ENCODE measurements at regions of chr20 and their contacts with region 1.

Region 1: GRCh38 chr20:44701118-44701857 is 13.9 kb upstream of the CCN5 start:
- DNase-seq: peak; percentile 38
- H3K4me3 Mint-ChIP-seq: no peak overlapping the region
- H3K27ac Mint-ChIP-seq: no peak overlapping the region
- H3K4me1 Mint-ChIP-seq: peaks cover 19% of the 10 kb centered on the region
- H3K27me3 Mint-ChIP-seq: no peaks in the 10 kb centered on the region
- CTCF ChIP-seq: no peak

Region 2: GRCh38 chr20:44598423-44599305 is 102.6 kb before region 1 on chr20:
- CTCF ChIA-PET with region 1: no interaction called
- POLR2A ChIA-PET with region 1: no interaction called
- intact Hi-C with region 1: no loop called
- DNase-seq: no peak
- H3K4me3 Mint-ChIP-seq: no peak overlapping the region
- H3K27ac Mint-ChIP-seq: no peak overlapping the region
- H3K4me1 Mint-ChIP-seq: peaks cover 12% of the 10 kb centered on the region
- H3K27me3 Mint-ChIP-seq: no peaks in the 10 kb centered on the region
- CTCF ChIP-seq: no peak

Region 3: GRCh38 chr20:44714696-44715482 is 13.6 kb after region 1 on chr20 and contains the start of gene CCN5:
- CTCF ChIA-PET with region 1: interaction called, 10 read pairs
- POLR2A ChIA-PET with region 1: interaction called, 5 read pairs
- intact Hi-C with region 1: no loop called
- DNase-seq: peak; percentile 94
- H3K4me3 Mint-ChIP-seq: peak within 1 kb of the TSS; percentile 24
- H3K27ac Mint-ChIP-seq: peak within 1 kb of the TSS; percentile 73
- H3K4me1 Mint-ChIP-seq: peaks cover 34% of the 10 kb centered on the region
- H3K27me3 Mint-ChIP-seq: no peaks in the 10 kb centered on the region
- CTCF ChIP-seq: no peak
- total RNA-seq, gene CCN5: 0.93 and 1.4 TPM in 2 replicates

Region 4: GRCh38 chr20:44780226-44780625 is 78.9 kb after region 1 on chr20:
- CTCF ChIA-PET with region 1: no interaction called
- POLR2A ChIA-PET with region 1: no interaction called
- intact Hi-C with region 1: no loop called
- DNase-seq: peak; percentile 60
- H3K4me3 Mint-ChIP-seq: no peak overlapping the region
- H3K27ac Mint-ChIP-seq: no peak overlapping the region
- H3K4me1 Mint-ChIP-seq: no peaks in the 10 kb centered on the region
- H3K27me3 Mint-ChIP-seq: peaks cover 22% of the 10 kb centered on the region
- CTCF ChIP-seq: no peak

Measured in MCF 10A (cell line).